Common myeloid progenitor, CD34-positive (primary cell): ENCODE measurements at regions of chr21 and their contacts with region 1.

Region 1: DNA sequence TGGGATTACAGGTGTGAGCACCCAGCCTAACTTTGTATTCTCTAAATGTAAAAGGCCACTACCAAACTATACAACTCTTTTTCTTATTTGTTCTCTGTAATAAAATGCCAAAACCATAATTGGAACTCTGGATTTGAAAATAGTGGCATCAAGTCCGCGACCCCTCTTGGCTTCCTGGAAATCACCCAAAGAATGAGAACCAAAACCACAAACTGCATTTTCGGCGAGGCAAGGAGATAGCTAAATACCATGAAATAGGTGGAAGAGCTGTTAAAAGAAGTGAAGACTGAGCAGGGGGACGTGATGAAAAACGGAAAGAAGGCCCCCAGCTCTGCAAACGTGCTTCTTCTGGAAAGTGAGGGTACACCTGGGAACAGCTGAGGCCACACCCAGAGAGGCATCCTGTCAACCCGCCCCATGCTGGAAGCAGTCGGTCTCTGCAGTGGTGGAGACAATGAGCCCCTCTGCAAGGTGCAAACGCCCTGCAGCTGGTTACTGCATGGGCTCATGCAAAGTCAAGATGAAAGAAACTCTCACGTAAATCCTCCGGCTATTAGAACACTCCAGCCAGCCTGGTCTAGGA is 22.5 kb downstream of the VPS26C start:
- DNase-seq: peak in 2 of 3 donors; percentile 55 to 62
- H3K4me3 ChIP-seq: peak overlapping the region in 3 of 7 experiments; percentile 12 to 58 (median 52)
- H3K27ac ChIP-seq: no peak overlapping the region
- H3K4me1 ChIP-seq: peaks cover 0 to 27% (median 18%) of the 10 kb centered on the region in 4 experiments
- H3K27me3 ChIP-seq: no peaks in the 10 kb centered on the region

Region 2: GRCh38 chr21:37017951-37018679 is 226.5 kb before region 1 on chr21:
- CTCF ChIA-PET with region 1: no interaction called
- POLR2A ChIA-PET with region 1: no interaction called
- DNase-seq: no peak
- H3K4me3 ChIP-seq: no peak overlapping the region
- H3K27ac ChIP-seq: no peak overlapping the region
- H3K4me1 ChIP-seq: no peaks in the 10 kb centered on the region
- H3K27me3 ChIP-seq: peaks cover 0 to 2% (median 0%) of the 10 kb centered on the region in 5 experiments

Region 3: DNA sequence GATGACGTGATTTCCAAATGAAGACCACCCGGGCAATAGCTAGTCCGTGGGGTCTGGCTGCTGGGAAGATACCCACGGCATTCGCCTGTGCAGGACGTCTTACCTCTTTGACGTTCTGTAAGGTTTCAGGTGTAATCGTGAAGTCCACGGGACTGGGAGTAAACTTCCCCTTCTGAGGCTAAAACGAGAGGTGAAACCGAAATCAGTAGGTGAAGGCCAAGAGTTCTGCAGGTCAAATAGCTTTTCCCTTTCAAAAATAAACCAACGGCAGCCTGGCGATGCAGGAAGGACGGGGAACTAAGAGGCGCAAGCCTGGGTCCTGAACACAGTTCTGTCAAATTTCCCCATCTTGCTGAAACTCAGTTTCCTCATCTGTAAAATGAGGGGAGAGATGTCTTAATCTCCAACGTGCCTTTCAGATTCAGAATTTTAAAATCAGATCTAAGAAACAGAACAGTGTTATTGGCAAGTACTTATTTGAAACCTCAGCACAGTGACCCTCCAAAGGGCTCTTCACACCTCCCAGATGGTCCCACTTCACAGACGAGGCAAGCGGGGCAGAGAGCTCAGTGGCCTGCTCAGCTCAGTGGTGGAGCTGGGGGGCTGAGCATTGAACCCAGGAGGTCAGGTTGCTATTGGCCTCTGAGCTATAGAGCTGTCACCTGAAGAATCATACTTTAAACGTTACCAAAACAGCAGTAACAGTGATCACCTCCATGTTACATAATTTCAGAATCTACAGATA is 12.1 kb before region 1 on chr21:
- CTCF ChIA-PET with region 1: interaction called, 10 read pairs
- POLR2A ChIA-PET with region 1: no interaction called
- DNase-seq: no peak
- H3K4me3 ChIP-seq: no peak overlapping the region
- H3K27ac ChIP-seq: no peak overlapping the region
- H3K4me1 ChIP-seq: peaks cover 0 to 3% (median 2%) of the 10 kb centered on the region in 4 experiments
- H3K27me3 ChIP-seq: no peaks in the 10 kb centered on the region

Region 4: GRCh38 chr21:37257967-37258877 is 13.6 kb after region 1 on chr21:
- CTCF ChIA-PET with region 1: interaction called, 10 read pairs
- POLR2A ChIA-PET with region 1: interaction called, 4 read pairs
- DNase-seq: peak; percentile 84 to 87 (median 86)
- H3K4me3 ChIP-seq: peak overlapping the region; percentile 54 to 86 (median 72)
- H3K27ac ChIP-seq: peak overlapping the region; percentile 82 to 86
- H3K4me1 ChIP-seq: peaks cover 7 to 45% (median 23%) of the 10 kb centered on the region in 4 experiments
- H3K27me3 ChIP-seq: no peaks in the 10 kb centered on the region